GM12878 (cell line): ENCODE measurements at regions of chr6 and their contacts with region 1.

Region 1: DNA sequence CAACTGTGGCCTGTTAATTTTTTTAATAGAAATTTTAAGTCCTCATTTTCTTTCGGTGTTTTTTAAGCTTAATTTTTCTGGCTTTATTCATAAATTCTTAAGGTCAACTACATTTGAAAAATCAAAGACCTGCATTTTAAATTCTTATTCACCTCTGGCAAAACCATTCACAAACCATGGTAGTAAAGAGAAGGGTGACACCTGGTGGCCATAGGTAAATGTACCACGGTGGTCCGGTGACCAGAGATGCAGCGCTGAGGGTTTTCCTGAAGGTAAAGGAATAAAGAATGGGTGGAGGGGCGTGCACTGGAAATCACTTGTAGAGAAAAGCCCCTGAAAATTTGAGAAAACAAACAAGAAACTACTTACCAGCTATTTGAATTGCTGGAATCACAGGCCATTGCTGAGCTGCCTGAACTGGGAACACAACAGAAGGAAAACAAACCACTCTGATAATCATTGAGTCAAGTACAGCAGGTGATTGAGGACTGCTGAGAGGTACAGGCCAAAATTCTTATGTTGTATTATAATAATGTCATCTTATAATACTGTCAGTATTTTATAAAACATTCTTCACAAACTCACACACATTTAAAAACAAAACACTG is 10.1 kb downstream of the HFE start:
- DNase-seq: no peak
- ATAC-seq: peak; percentile 92
- H3K4me3 ChIP-seq: no peak overlapping the region
- H3K27ac ChIP-seq: no peak overlapping the region
- H3K4me1 ChIP-seq: peaks cover 4% of the 10 kb centered on the region
- H3K27me3 ChIP-seq: no peaks in the 10 kb centered on the region
- CTCF ChIP-seq: peak; percentile 54 to 82 (median 65); a peak in 5 of 6 replicates
- EP300 ChIP-seq: no peak
- POLR2A ChIP-seq: no peak
- RAD21 ChIP-seq: peak; percentile 96

Region 2: GRCh38 chr6:25971187-25971811 is 126.1 kb before region 1 on chr6:
- CTCF ChIA-PET with region 1: no interaction called
- POLR2A ChIA-PET with region 1: no interaction called
- RAD21 ChIA-PET with region 1: no interaction called
- SMC1A ChIA-PET with region 1: no interaction called
- in situ Hi-C with region 1: no loop called
- intact Hi-C with region 1: no loop called
- DNase-seq: no peak
- ATAC-seq: peak; percentile 19
- H3K4me3 ChIP-seq: 0 out of 2 replicates have a peak overlapping the region, but pooled peaks have one; percentile 13
- H3K27ac ChIP-seq: no peak overlapping the region; the same call in 1 of the 2 replicates
- H3K4me1 ChIP-seq: peaks cover 23% of the 10 kb centered on the region
- H3K27me3 ChIP-seq: no peaks in the 10 kb centered on the region
- CTCF ChIP-seq: no peak
- EP300 ChIP-seq: no peak
- POLR2A ChIP-seq: no peak
- RAD21 ChIP-seq: no peak

Region 3: DNA sequence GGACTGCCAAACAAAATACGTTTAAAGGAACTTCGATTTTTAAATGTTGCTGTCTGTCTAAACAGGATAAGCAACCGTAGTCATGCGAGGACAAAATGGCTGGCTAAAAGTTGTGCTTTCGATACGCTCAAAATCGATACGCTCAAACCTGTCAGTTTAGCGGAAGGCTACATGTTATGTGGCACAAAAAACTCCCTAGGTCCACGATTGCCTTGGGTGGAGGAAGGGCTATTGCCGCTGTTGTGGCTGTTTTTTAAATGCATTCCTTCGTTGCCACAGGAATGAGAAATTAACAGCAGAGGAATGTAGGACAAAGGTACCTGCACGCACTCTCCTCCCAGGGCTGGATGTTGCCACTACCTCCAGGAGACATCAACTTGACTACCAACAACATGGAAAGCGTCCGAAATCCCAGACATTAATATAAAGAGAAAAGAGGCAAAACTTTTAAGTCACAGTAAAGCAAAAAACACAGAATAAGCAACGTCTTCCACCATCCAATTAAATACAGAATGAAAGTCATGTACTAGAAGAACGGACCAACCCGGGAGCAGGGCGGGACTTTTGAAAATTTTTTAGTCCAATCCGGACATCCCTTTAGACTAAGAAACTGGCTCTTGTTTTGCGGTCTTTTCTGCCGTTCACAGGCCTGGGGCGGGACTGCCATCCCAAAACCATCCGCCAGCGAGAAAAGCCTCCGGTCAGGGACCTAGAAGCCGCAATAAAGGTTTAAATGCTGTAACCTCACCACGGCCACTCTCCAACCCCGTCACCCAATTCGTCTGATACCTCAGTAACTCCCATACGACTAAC is 42.3 kb before region 1 on chr6:
- CTCF ChIA-PET with region 1: interaction called, 897 read pairs
- POLR2A ChIA-PET with region 1: interaction called, 4 read pairs
- RAD21 ChIA-PET with region 1: interaction called, 286 read pairs
- SMC1A ChIA-PET with region 1: interaction called, 645 read pairs
- in situ Hi-C with region 1: no loop called
- intact Hi-C with region 1: no loop called
- DNase-seq: peak; percentile 88
- ATAC-seq: peak; percentile 71
- H3K4me3 ChIP-seq: peak overlapping the region; percentile 75
- H3K27ac ChIP-seq: peak overlapping the region; percentile 93
- H3K4me1 ChIP-seq: peaks cover 4% of the 10 kb centered on the region; the same call in 1 of the 2 replicates
- H3K27me3 ChIP-seq: no peaks in the 10 kb centered on the region
- CTCF ChIP-seq: peak in 1 of 3 experiments; percentile 26; a peak in 1 of 6 replicates
- EP300 ChIP-seq: no peak
- POLR2A ChIP-seq: peak; percentile 67
- RAD21 ChIP-seq: no peak